Heart left ventricle (tissue), 16 donors: ENCODE measurements at regions of chr6 and their contacts with region 1.

Region 1: DNA sequence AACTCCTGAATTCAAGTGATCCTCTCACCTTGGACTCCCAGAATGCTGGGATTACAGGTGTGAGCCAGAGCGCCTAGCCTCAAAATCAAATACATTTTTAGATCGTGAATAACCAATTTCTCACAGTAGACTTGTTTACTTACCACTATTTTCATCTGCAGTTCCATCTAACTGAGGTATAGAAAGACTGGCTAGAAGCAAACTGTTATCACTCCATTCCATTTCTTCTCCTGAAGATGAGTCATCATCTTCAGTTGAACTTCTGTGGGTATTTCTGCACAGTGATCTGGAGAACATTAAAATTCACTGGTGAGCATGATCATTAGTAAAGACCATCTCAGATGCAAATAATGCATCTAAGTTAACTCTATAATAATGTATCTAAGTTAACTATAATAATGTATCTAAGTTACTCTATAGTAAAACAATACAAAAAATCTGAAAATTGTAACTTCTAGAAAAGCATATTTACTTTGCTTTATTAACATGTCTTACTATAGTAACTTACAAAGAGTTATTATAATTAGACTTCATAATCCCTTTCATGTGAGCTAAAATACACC is 105.4 kb downstream of the REV3L start:
- DNase-seq: no peak
- ATAC-seq: no peak
- H3K4me3 ChIP-seq: no peak overlapping the region
- H3K27ac ChIP-seq: no peak overlapping the region
- H3K4me1 ChIP-seq: peaks cover 0 to 8% (median 0%) of the 10 kb centered on the region in 12 donors
- H3K27me3 ChIP-seq: no peaks in the 10 kb centered on the region
- CTCF ChIP-seq: no peak
- POLR2A ChIP-seq: no peak

Region 2: GRCh38 chr6:110101885-110102284 is 1275.8 kb before region 1 on chr6:
- intact Hi-C with region 1: no loop called
- DNase-seq: no peak
- ATAC-seq: no peak
- H3K4me3 ChIP-seq: no peak overlapping the region
- H3K27ac ChIP-seq: no peak overlapping the region
- H3K4me1 ChIP-seq: peaks cover 0 to 20% (median 8%) of the 10 kb centered on the region in 12 donors
- H3K27me3 ChIP-seq: no peaks in the 10 kb centered on the region
- CTCF ChIP-seq: no peak
- POLR2A ChIP-seq: no peak

Region 3: GRCh38 chr6:111462770-111463391 is 85.2 kb after region 1 on chr6:
- intact Hi-C with region 1: loop called in 1 of 10 experiments (anchors 10 kb)
- DNase-seq: no peak
- ATAC-seq: peak; percentile 77 to 96 (median 93)
- H3K4me3 ChIP-seq: no peak overlapping the region
- H3K27ac ChIP-seq: peak overlapping the region in 10 of 12 donors; percentile 27 to 63 (median 52)
- H3K4me1 ChIP-seq: peaks cover 0 to 33% (median 18%) of the 10 kb centered on the region in 12 donors
- H3K27me3 ChIP-seq: no peaks in the 10 kb centered on the region
- CTCF ChIP-seq: no peak
- POLR2A ChIP-seq: no peak

Region 4: DNA sequence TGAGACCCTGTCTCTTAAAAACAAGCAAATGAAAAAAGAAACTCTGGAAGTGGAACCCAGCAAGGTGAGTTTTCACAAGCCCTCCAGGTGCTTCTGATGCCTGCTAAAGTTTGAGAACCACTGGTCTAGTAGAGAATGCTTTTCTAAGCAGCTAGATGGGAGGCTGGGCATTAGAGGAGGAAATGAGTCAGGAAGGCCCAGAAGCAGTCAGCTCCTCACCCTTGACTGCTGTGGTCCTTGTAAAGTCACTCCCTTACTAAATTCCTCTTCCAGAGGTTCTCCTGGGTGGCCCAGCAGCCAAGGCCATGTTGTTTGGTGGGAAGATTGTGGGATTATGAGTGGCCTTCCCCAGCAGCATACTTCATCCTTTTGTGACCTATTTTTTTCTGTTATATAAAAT is 547.7 kb after region 1 on chr6:
- intact Hi-C with region 1: no loop called
- DNase-seq: no peak
- ATAC-seq: no peak
- H3K4me3 ChIP-seq: no peak overlapping the region
- H3K27ac ChIP-seq: no peak overlapping the region
- H3K4me1 ChIP-seq: peaks cover 0 to 17% (median 0%) of the 10 kb centered on the region in 12 donors
- H3K27me3 ChIP-seq: no peaks in the 10 kb centered on the region
- CTCF ChIP-seq: no peak
- POLR2A ChIP-seq: no peak